ENCODE measurements at regions of chr12 and their contacts with region 1.

Region 1: DNA sequence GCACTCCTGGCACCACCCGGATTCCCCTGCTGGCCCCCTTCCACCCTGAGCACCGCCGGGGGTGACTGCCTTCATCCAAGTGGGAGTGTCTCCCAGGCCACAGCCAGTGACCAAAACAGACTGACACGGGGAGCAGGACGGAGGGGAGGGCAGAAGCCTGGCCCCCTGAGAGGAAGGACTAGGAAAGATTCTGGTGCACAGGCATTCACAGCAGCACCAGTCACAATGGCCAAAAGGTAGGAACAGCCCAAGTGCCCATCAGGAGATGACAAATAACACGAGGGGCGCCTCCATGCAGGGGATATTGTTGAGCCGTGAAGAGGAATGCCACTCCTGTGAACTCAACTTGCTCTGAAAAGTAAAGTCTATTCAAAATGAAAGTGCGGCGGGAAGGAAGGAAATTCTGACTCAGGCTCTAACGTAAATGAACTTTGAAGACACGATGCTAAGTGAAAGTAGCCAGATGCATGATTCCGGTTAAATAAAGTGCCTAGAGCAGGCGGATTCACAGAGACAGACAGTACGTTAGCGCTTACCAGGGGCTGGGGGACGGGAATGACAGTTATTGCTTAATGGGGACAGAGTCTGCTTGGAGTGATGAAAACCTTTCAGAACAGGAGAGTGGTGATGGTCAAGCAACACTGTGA is 146.1 kb upstream of the NCOR2 start:
- H3K4me3 Mint-ChIP-seq: peak overlapping the region; percentile 57
- H3K27ac Mint-ChIP-seq: peak overlapping the region; percentile 96
- H3K4me1 Mint-ChIP-seq: peaks cover 50% of the 10 kb centered on the region
- H3K27me3 Mint-ChIP-seq: peaks cover 25% of the 10 kb centered on the region

Region 2: GRCh38 chr12:124680863-124681778 is 32.4 kb before region 1 on chr12:
- intact Hi-C with region 1: loop called (anchors 2 kb)
- H3K4me3 Mint-ChIP-seq: peak overlapping the region; percentile 20
- H3K27ac Mint-ChIP-seq: peak overlapping the region; percentile 82
- H3K4me1 Mint-ChIP-seq: peaks cover 81% of the 10 kb centered on the region
- H3K27me3 Mint-ChIP-seq: peaks cover 10% of the 10 kb centered on the region

Region 3: DNA sequence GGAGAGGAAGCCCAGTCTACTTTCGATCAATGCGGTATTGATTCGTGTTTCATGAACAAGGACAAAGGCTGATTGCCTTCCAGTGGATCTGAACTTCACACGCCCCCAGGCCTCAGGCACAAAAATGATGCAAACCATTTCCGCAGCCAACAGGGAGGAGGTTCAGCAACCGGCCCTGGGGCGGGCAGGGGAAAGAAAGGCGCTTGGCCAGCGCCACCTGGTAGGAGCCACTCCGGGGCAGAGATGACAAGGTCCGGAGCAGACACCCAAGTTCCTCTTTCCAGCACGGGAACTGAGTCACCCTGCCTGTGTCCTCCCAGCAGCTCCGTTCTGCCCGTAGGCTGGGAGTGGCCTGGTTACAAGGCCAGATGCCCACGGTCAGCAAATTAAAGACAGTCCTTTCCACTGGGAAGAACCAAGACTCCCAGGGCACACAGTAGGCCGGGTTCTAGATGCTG is 13.7 kb after region 1 on chr12:
- intact Hi-C with region 1: loop called (anchors 2 kb)
- H3K4me3 Mint-ChIP-seq: no peak overlapping the region
- H3K27ac Mint-ChIP-seq: peak overlapping the region; percentile 90
- H3K4me1 Mint-ChIP-seq: peaks cover 39% of the 10 kb centered on the region
- H3K27me3 Mint-ChIP-seq: no peaks in the 10 kb centered on the region

Region 4: DNA sequence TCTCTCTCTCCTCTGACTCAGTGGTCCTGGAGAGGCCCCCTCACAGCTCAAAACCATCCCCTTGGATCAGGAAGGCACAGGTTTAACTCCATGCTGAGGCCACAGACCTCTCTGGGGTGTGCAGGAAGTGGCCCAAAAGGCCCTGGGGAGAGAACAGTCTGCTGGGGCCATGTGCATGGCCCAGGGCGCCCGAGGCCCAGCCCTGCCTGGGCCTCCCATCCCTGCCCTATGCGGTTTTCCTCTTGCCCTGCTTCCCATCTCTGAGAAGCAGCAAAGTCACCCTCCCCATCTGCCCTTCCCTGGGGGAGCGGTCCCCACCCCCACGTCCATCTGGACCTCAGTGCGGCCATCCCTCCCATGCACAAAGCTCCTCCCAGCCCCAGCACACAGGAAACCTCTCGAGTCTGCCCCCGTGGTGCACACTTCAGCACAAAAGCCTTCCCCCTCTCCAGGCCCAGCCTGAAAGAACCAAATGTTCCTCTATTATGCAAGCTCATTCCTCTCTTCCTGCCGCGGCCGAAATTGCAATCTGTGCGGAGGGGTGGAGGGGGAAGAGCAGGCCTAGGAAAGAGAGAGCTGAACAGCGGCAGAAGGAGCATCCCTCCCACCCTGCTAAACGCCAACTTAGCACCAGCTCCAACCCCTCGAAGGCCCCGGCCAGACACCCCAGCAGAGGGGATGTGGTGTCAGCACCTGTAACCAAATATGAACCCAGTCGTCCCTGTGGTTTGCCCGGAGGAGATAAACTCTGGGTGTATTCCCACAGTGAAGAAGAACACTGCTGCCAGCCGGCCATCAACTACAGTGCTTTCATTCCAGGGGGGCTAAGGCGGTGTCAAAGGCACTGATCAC is 41.6 kb after region 1 on chr12:
- intact Hi-C with region 1: loop called (anchors 1 kb)
- H3K4me3 Mint-ChIP-seq: peak overlapping the region; percentile 54
- H3K27ac Mint-ChIP-seq: peak overlapping the region; percentile 86
- H3K4me1 Mint-ChIP-seq: peaks cover 96% of the 10 kb centered on the region
- H3K27me3 Mint-ChIP-seq: peaks cover 3% of the 10 kb centered on the region